CD4-positive, alpha-beta memory T cell (primary cell): ENCODE measurements at regions of chr19 and their contacts with region 1.

Region 1: DNA sequence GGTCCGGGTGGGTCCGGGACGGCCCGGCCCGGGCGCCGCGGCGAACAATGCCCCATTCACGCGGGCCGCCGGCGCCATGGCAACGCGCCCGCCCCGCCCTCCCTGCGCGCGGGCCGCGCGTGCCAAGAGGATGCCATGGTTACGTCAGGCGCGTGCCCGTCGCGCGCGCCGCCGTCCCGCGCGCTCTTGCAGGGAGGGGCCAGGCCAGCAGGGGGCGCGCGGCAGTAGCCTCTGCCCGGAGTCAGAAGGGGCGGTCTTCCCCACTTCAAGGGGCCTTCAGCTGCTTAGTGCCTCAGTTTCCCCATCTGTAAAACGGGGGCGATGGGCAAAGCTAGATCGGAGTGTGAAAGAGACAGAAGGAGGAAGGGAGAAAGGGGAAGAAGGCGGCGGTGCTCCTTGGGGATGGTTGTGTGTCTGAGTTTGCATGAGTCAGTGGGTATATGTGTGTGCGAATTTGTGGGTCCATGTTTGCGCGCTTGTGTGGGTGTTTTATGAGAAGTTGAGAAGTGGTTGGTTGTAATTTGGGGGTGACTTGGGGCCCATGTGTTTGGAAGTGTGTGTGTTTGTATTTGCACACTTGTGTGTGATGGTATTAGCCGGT is 11.6 kb upstream of the NFIX start:
- DNase-seq: peak; percentile 75 to 86 (median 82)
- H3K4me3 ChIP-seq: peak overlapping the region in 1 of 2 donors; percentile 35
- H3K4me3 Mint-ChIP-seq: no peak overlapping the region
- H3K27ac ChIP-seq: no peak overlapping the region
- H3K27ac Mint-ChIP-seq: no peak overlapping the region
- H3K4me1 ChIP-seq: peaks cover 18% of the 10 kb centered on the region
- H3K4me1 Mint-ChIP-seq: peaks cover 0 to 13% (median 4%) of the 10 kb centered on the region in 4 donors
- H3K27me3 ChIP-seq: no peaks in the 10 kb centered on the region
- H3K27me3 Mint-ChIP-seq: peaks cover under 1 to 5% of the 10 kb centered on the region in 2 donors

Region 2: DNA sequence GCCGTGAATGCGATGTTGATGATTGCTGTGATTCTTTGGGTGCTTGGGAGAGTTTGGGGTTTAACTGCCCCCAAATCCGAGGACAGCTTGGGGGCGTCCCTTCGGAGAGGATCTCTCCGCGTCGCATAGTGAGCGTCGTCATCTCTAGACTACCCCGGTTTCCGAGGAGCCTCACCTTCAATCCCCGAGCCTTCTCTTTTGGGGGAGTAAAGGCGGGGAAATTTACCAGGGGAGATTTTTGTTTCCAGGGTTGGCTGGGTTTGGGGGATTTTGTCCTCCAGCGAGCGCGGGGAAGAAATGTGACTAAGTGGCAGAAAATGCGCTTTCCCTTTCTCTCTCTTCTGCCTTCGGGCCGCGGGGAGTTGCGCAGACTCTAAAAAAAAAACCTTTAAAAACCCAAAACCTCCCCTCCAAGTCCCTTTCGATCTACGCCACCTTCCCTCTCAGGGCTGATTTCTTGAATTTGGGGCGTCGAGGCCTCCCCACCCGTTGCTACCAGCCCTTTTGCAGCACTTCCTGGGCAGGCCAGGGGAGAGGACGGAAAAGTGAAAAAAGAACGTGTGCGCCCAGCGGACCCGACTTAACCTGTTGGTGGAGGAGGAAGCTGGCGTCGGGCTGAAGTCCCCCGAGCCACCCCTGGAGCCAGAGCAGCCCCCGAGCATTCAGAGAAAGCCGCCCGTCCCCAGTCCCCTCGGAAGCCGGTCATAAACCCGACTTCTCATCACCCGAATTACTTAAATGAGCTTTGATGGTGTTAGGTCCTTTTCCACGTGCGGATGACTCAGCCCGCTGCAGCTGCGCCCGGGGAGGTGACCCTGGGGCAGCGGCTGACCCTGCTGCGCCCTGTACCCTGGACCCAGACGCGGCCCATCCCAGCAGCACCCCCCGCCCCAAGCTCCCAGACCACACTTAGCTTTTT is 29.3 kb after region 1 on chr19:
- CTCF ChIA-PET with region 1: no interaction called
- POLR2A ChIA-PET with region 1: interaction called, 3 read pairs
- intact Hi-C with region 1: loop called (anchors 2 kb)
- DNase-seq: peak in 4 of 5 donors; percentile 19 to 35 (median 33)
- H3K4me3 ChIP-seq: peak overlapping the region; percentile 37 to 39
- H3K4me3 Mint-ChIP-seq: peak overlapping the region; percentile 81 to 92 (median 86)
- H3K27ac ChIP-seq: no peak overlapping the region
- H3K27ac Mint-ChIP-seq: peak overlapping the region in 5 of 7 donors; percentile 20 to 83 (median 75)
- H3K4me1 ChIP-seq: peaks cover 26% of the 10 kb centered on the region
- H3K4me1 Mint-ChIP-seq: peaks cover 8 to 34% (median 21%) of the 10 kb centered on the region in 4 donors
- H3K27me3 ChIP-seq: peaks cover 42% of the 10 kb centered on the region
- H3K27me3 Mint-ChIP-seq: peaks cover 56 to 62% of the 10 kb centered on the region in 2 donors

Region 3: DNA sequence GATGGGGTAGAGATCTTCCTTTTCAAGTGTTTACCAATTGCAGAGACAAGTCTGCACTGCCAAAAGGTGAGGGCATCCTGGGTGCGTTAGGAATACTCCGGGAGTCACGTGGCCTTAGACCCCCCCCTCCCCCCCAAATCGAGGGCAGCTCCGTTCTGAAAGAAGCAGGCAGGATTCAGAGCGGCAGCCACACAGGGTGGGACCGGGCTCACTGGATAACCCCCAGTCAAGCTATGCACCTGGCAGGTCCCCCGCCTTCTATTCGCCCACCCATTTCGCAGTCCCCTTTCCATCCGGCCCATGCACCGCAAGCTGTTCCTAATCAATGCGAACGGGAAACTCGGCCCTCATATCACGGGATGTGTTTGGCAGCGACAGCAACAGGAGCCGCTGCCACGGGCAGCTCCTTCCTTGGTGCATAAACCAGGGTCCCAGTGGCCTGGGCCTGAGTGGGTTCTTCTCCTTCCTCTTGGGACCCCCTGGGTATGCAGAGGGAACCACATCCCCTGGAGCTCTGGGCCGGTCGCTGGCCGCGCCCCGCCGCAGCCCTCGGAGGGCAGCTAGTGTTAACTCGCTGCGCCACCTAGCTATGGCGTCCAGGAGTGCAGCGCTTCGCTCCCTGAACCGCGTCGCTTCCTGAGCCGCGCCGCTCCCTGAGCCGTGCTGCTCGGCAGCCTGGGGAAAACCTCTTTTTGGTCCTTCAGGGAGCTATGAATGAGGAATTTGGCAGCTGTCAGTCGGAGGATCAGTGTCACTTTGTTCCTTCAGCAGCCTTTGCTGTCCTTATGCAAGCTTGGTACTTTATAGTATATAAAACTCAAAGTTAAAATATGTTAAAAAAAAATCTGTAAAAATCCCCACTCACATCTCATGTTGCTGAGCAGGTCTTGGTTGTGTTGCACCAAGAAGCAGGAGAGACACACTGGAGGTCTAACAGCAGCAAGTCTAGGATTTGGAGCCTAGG is 77.6 kb after region 1 on chr19:
- CTCF ChIA-PET with region 1: interaction called, 248 read pairs
- POLR2A ChIA-PET with region 1: no interaction called
- intact Hi-C with region 1: loop called (anchors 1 kb)
- DNase-seq: peak; percentile 63 to 68 (median 64)
- H3K4me3 ChIP-seq: peak overlapping the region; percentile 25 to 64
- H3K4me3 Mint-ChIP-seq: peak overlapping the region; percentile 76 to 88 (median 84)
- H3K27ac ChIP-seq: no peak overlapping the region
- H3K27ac Mint-ChIP-seq: peak overlapping the region in 2 of 7 donors; percentile 27 to 29
- H3K4me1 ChIP-seq: peaks cover 15% of the 10 kb centered on the region
- H3K4me1 Mint-ChIP-seq: peaks cover 3 to 10% (median 6%) of the 10 kb centered on the region in 4 donors
- H3K27me3 ChIP-seq: peaks cover 11% of the 10 kb centered on the region
- H3K27me3 Mint-ChIP-seq: peaks cover 1 to 17% of the 10 kb centered on the region in 2 donors

Region 4: GRCh38 chr19:13104360-13104847 is 120.8 kb after region 1 on chr19:
- CTCF ChIA-PET with region 1: interaction called, 16 read pairs
- POLR2A ChIA-PET with region 1: no interaction called
- intact Hi-C with region 1: no loop called
- DNase-seq: peak; percentile 50 to 74 (median 60)
- H3K4me3 ChIP-seq: peak overlapping the region; percentile 65 to 73
- H3K4me3 Mint-ChIP-seq: peak overlapping the region; percentile 87 to 97 (median 92)
- H3K27ac ChIP-seq: peak overlapping the region; percentile 48
- H3K27ac Mint-ChIP-seq: peak overlapping the region; percentile 83 to 94 (median 93)
- H3K4me1 ChIP-seq: peaks cover 63% of the 10 kb centered on the region
- H3K4me1 Mint-ChIP-seq: peaks cover 18 to 49% (median 32%) of the 10 kb centered on the region in 4 donors
- H3K27me3 ChIP-seq: no peaks in the 10 kb centered on the region
- H3K27me3 Mint-ChIP-seq: no peaks in the 10 kb centered on the region

Region 5: GRCh38 chr19:13731147-13731964 is 747.7 kb after region 1 on chr19:
- CTCF ChIA-PET with region 1: no interaction called
- POLR2A ChIA-PET with region 1: no interaction called
- intact Hi-C with region 1: loop called (anchors 5 kb)
- DNase-seq: peak; percentile 92 to 93 (median 92)
- H3K4me3 ChIP-seq: peak overlapping the region; percentile 79 to 87
- H3K4me3 Mint-ChIP-seq: peak overlapping the region; percentile 89 to 97 (median 92)
- H3K27ac ChIP-seq: peak overlapping the region; percentile 59
- H3K27ac Mint-ChIP-seq: peak overlapping the region; percentile 73 to 97 (median 94)
- H3K4me1 ChIP-seq: peaks cover 19% of the 10 kb centered on the region
- H3K4me1 Mint-ChIP-seq: peaks cover 6 to 19% (median 10%) of the 10 kb centered on the region in 4 donors
- H3K27me3 ChIP-seq: no peaks in the 10 kb centered on the region
- H3K27me3 Mint-ChIP-seq: no peaks in the 10 kb centered on the region